SK-N-SH (cell line): ENCODE measurements at regions of chr3 and their contacts with region 1.

Region 1: DNA sequence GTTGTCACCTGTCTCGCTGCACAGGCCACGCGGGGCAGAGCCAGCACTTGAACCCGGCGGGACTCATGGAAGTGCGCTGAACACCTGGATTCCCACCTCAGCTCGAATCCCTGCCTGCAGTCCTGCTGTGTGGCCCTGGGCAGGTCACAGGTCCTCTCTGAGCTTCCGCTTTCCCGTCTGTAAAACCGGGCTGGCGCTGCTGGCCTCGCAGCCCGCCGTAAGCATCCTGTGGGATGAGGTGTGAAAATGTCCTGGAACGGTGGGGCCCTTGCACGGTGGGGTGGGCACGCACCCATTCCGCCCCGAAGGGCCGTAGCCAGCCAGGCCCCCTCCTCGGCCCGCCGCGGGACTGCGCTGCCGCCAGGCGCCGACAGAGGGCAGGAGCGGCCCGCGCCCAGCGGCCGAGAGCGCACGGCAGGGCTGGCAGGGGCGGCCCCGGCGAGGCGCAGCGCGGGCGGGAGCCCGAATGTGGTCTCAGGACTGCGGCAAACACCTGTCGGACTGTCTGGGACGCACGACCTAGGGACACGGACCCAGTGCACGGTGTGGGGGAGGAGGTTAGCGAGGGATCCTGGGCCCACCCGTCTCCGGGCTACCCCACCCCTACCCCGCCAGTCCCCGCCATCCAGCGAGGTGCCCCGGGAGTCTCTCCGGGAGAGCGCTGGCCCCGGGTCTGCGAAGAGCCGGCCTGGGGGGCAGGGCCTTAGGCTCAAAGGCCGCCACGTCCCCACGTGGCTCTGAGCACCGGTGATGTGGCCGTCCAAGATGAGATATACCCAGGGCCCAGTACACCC is 40.4 kb downstream of the DNAJB8 start:
- DNase-seq: peak; percentile 95
- H3K4me3 ChIP-seq: peak overlapping the region; percentile 23 to 24; a peak in 2 of 4 replicates
- H3K27ac ChIP-seq: peak overlapping the region in 1 of 2 experiments; percentile 71; a peak in 2 of 4 replicates
- H3K4me1 ChIP-seq: peaks cover 0 to 76% of the 10 kb centered on the region in 2 experiments; a peak in 2 of 4 replicates
- H3K27me3 ChIP-seq: no peaks in the 10 kb centered on the region
- CTCF ChIP-seq: peak; percentile 72
- EP300 ChIP-seq: no peak
- RAD21 ChIP-seq: peak; percentile 84

Region 2: DNA sequence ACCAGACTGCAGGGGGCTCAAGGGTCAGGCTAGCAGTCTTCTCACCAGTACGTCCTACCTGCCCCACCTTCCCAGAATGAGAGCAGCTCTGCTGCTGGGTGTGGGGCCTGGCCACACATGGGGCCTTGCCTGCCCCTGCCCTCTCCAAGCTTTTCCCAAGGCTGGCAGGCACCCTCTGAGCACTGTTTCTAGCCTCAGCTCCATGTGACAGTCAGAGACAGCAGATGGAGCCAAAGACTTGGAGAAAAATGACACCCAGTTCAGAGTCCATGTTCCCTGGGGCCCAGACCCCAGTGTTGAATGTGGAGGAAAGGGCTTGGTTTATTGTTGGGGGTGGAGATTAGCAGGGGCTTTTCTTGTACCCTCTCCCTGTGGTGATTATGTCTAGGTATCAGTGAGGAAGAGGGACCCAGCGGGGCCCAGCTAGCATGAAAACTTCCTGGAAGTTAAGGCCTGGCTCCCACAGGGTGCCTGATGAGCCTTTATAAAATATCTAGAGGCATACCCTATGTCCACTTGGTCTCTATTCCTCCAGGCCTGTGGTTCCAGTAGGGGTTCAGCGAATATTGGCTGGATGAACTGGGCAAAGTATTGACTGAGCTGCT is 119.2 kb before region 1 on chr3:
- CTCF ChIA-PET with region 1: interaction called, 21 read pairs
- POLR2A ChIA-PET with region 1: no interaction called
- DNase-seq: peak; percentile 58
- H3K4me3 ChIP-seq: no peak overlapping the region
- H3K27ac ChIP-seq: peak overlapping the region in 1 of 2 experiments; percentile 67; a peak in 2 of 4 replicates
- H3K4me1 ChIP-seq: peaks cover 0 to 26% of the 10 kb centered on the region in 2 experiments; a peak in 2 of 4 replicates
- H3K27me3 ChIP-seq: no peaks in the 10 kb centered on the region
- CTCF ChIP-seq: no peak; the same call in 1 of the 2 replicates
- EP300 ChIP-seq: no peak
- RAD21 ChIP-seq: peak; percentile 89

Region 3: GRCh38 chr3:128438488-128439072 is 12.3 kb after region 1 on chr3:
- CTCF ChIA-PET with region 1: interaction called, 18 read pairs
- POLR2A ChIA-PET with region 1: interaction called, 3 read pairs
- DNase-seq: peak; percentile 41
- H3K4me3 ChIP-seq: no peak overlapping the region
- H3K27ac ChIP-seq: no peak overlapping the region
- H3K4me1 ChIP-seq: peaks cover 0 to 30% of the 10 kb centered on the region in 2 experiments; a peak in 1 of 4 replicates
- H3K27me3 ChIP-seq: no peaks in the 10 kb centered on the region
- CTCF ChIP-seq: peak; percentile 51
- EP300 ChIP-seq: no peak
- RAD21 ChIP-seq: no peak

Region 4: GRCh38 chr3:128464188-128464587 is 37.9 kb after region 1 on chr3:
- CTCF ChIA-PET with region 1: interaction called, 29 read pairs
- POLR2A ChIA-PET with region 1: interaction called, 9 read pairs
- DNase-seq: no peak
- H3K4me3 ChIP-seq: no peak overlapping the region
- H3K27ac ChIP-seq: no peak overlapping the region
- H3K4me1 ChIP-seq: peaks cover 0 to 58% of the 10 kb centered on the region in 2 experiments; a peak in 1 of 4 replicates
- H3K27me3 ChIP-seq: peaks cover 5% of the 10 kb centered on the region; the same call in 1 of the 2 replicates
- CTCF ChIP-seq: peak; percentile 16; the same call in 1 of the 2 replicates
- EP300 ChIP-seq: no peak
- RAD21 ChIP-seq: no peak; the same call in 1 of the 2 replicates

Region 5: DNA sequence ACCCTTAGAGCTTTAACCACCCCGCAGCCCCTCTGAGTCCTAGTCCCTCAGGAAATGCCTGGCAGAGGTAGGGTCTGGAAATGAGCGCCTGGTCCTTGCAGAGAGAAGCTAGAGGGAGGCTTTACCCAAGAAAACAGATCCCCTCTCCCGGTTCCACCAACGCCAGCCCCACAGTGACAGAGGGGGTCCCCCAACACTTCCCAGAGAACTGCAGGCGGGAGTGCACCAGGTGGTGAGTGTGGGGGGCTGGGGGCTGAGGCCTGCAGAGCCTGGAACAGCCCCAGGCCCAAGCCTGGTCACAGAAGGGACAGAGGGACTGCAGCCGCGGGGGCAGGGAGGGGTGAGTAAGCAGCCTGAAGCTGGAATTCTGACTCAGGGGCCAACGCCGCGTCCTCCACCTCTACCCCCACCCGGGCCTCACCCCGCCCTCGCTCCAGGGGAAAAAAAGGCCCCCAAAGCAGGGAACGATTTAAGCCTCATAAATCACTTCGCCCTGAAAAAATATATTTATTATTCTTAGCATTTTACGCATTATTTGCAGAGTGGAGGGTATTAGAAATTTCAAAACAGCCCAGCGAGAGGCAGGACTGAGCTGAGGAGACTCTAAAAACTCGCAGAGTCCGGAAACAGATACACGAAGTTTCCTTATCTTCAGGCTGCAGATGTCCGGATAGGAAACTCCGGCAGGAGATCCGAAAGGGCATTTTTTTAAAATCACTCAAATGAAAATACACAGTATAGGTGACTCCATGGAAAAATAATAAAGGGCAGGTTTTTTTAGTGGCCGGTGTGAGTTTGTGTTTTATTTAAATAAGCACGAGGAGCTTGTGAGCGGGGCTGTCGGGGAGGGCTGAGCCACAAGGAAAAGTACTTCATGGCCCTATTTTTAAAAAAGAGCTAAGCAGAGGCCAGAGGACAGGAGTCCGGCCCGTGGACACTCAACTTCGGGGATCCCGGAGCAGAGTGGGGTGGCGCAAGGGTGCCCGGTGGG is 56.6 kb after region 1 on chr3:
- CTCF ChIA-PET with region 1: interaction called, 177 read pairs
- POLR2A ChIA-PET with region 1: interaction called, 16 read pairs
- DNase-seq: peak; percentile 63
- H3K4me3 ChIP-seq: peak overlapping the region; percentile 12 to 75
- H3K27ac ChIP-seq: peak overlapping the region; percentile 51 to 97
- H3K4me1 ChIP-seq: peaks cover 8 to 43% of the 10 kb centered on the region in 2 experiments
- H3K27me3 ChIP-seq: no peaks in the 10 kb centered on the region
- CTCF ChIP-seq: peak; percentile 38
- EP300 ChIP-seq: peak in 1 of 2 experiments; percentile 35; a peak in 1 of 4 replicates
- RAD21 ChIP-seq: no peak

Region 6: DNA sequence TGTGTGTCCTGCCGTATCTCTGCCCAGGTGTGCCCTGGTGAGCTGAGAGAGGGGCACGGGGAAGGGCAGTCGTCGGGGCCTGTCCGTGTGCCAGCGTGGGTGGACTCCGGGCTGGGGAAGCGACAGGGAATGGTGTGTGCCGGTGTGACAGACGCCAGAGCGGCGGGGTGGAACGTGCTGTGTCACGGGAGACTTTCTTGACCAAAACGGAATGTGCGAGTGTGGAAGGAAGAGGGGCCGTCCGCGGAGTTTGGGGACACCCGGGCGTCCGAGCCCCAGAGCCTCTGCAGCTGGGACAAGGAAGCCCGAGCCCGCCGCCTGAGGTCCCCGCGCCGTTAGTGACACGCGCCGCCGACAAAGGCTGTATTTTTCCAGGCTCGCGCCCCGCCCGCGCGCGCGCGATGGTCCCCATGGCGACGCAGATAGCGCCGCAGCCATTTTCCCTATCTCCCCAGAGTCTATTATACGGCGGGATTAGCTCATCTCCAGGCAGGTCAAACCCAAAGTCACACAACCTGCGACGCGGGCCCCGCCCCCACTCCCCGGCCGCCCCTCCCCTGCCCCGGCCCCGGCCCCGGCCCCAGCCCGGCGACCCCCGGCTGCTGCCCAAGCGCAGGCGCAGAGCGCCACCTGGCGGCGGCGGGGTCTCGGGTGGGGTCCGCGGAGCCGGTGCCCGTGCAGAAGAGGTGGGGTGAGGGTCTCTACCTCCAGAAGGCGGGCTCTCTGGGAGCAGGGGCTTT is 71.2 kb after region 1 on chr3:
- CTCF ChIA-PET with region 1: interaction called, 57 read pairs
- POLR2A ChIA-PET with region 1: interaction called, 19 read pairs
- DNase-seq: peak; percentile 95
- H3K4me3 ChIP-seq: peak overlapping the region; percentile 44 to 58
- H3K27ac ChIP-seq: peak overlapping the region in 1 of 2 experiments; percentile 97; a peak in 2 of 4 replicates
- H3K4me1 ChIP-seq: peaks cover 0 to 47% of the 10 kb centered on the region in 2 experiments; a peak in 1 of 4 replicates
- H3K27me3 ChIP-seq: peaks cover 3% of the 10 kb centered on the region; the same call in 1 of the 2 replicates
- CTCF ChIP-seq: peak; percentile 74
- EP300 ChIP-seq: peak in 1 of 2 experiments; percentile 8; a peak in 1 of 4 replicates
- RAD21 ChIP-seq: peak; percentile 64

Region 7: DNA sequence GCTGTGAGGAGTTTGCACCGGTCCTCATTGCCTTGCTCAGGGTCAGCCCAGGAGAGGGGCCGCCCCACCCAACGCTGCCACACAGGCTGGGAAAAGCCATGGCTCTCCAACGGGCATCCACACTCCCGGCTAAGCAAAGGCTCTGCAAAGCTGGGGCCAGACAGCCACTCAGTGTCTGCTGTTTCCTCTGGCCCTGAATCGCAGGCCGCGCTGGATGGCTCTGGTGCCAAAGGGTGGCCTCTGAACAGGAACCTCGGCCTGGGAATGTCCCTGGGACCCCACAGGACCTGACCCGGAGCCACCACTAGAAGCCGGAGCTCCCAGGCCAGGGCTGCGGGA is 181.4 kb after region 1 on chr3:
- CTCF ChIA-PET with region 1: interaction called, 10 read pairs
- POLR2A ChIA-PET with region 1: no interaction called
- DNase-seq: no peak
- H3K4me3 ChIP-seq: no peak overlapping the region
- H3K27ac ChIP-seq: no peak overlapping the region
- H3K4me1 ChIP-seq: peaks cover 0 to 22% of the 10 kb centered on the region in 2 experiments; a peak in 1 of 4 replicates
- H3K27me3 ChIP-seq: no peaks in the 10 kb centered on the region
- CTCF ChIP-seq: no peak
- EP300 ChIP-seq: no peak
- RAD21 ChIP-seq: no peak